Mammary epithelial cell (primary cell): ENCODE measurements at regions of chr2 and their contacts with region 1.

Region 1: GRCh38 chr2:217353591-217353990 is 493.7 kb upstream of the TNP1 start:
- DNase-seq: no peak
- H3K4me3 ChIP-seq: no peak overlapping the region
- H3K27ac ChIP-seq: no peak overlapping the region
- H3K4me1 ChIP-seq: peaks cover 3% of the 10 kb centered on the region
- H3K27me3 ChIP-seq: no peaks in the 10 kb centered on the region
- CTCF ChIP-seq: no peak

Region 2: GRCh38 chr2:217289877-217290279 is 63.7 kb before region 1 on chr2:
- CTCF ChIA-PET with region 1: no interaction called
- dilution Hi-C with region 1: loop called (anchors 5 kb)
- in situ Hi-C with region 1: no loop called
- intact Hi-C with region 1: no loop called
- DNase-seq: peak; percentile 70
- H3K4me3 ChIP-seq: no peak overlapping the region
- H3K27ac ChIP-seq: no peak overlapping the region
- H3K4me1 ChIP-seq: peaks cover 11% of the 10 kb centered on the region
- H3K27me3 ChIP-seq: no peaks in the 10 kb centered on the region
- CTCF ChIP-seq: no peak